ENCODE measurements at regions of chr17 and their contacts with region 1.

Region 1: GRCh38 chr17:46154151-46154816 is 38.9 kb downstream of the KANSL1 start:
- DNase-seq: no peak
- ATAC-seq: peak; percentile 15 to 17; a peak in 3 of 6 replicates
- H3K4me3 ChIP-seq: no peak overlapping the region
- H3K27ac ChIP-seq: no peak overlapping the region
- H3K4me1 ChIP-seq: peaks cover 78% of the 10 kb centered on the region
- CTCF ChIP-seq: no peak
- EP300 ChIP-seq: no peak
- POLR2A ChIP-seq: no peak
- RAD21 ChIP-seq: no peak

Region 2: DNA sequence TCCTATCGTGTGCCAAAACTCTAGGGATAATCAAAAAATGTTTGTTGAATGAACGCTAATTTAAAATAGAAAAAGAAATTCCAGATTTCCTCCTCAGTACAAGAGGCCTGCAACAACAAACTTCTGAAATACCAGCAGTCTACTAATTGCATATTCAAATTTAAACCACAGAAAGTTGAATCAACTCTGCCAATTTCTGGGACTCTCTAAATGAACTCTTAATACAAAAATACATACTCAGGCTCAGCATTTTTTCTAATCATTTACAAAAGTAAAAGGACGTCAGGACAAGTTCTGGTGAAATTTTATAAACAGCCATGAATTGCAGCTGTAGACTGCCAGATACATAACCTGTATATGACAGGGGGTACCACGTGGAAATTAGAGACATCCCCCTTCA is 10.0 kb before region 1 on chr17:
- CTCF ChIA-PET with region 1: interaction called, 16 read pairs
- POLR2A ChIA-PET with region 1: interaction called, 4 read pairs
- DNase-seq: no peak
- ATAC-seq: no peak
- H3K4me3 ChIP-seq: no peak overlapping the region
- H3K27ac ChIP-seq: no peak overlapping the region
- H3K4me1 ChIP-seq: peaks cover 59% of the 10 kb centered on the region
- CTCF ChIP-seq: no peak
- EP300 ChIP-seq: no peak
- POLR2A ChIP-seq: no peak
- RAD21 ChIP-seq: no peak

Region 3: DNA sequence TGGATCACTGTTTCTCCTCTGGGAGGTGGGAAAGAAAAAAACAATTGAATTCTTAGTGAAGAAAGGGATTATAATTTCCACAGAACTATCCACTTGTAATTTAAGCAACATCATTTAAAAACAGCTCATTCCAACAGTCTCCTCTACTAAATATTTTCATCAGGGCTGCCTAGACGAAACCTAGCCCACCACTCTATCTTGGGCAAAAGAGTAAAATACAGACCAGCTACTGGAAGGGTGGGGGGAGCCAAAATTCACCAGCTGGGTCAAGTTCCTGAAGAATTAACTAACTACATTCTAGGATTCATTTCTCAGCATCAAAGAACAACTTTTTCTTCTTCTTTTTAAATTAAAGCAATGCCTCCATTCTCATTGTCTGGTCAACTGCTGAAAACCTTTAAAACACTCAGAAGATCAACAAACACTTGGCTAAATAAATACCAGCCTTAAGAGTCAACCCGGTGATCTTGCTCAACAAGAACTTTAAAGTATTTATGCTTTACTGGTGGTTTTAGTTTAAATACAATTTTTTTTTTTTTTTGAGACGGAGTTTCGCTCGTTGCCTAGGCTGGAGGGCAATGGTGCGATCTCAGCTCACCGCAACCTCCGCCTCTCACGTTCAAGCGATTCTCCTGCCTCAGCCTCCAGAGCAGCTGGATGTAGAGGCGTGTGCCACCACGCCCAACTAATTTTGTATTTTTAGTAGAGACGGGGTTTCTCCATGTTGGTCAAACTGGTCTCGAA is 13.7 kb after region 1 on chr17:
- CTCF ChIA-PET with region 1: interaction called, 12 read pairs
- POLR2A ChIA-PET with region 1: no interaction called
- DNase-seq: peak in 1 of 2 experiments; percentile 61
- ATAC-seq: peak in 1 of 2 experiments; percentile 64; a peak in 3 of 6 replicates
- H3K4me3 ChIP-seq: peak overlapping the region; percentile 6; the same call in 1 of the 3 replicates
- H3K27ac ChIP-seq: peak overlapping the region; percentile 47 to 51
- H3K4me1 ChIP-seq: peaks cover 54% of the 10 kb centered on the region
- CTCF ChIP-seq: no peak
- EP300 ChIP-seq: no peak
- POLR2A ChIP-seq: no peak
- RAD21 ChIP-seq: no peak